AG04449 (cell line): ENCODE measurements at regions of chr2 and their contacts with region 1.

Region 1: DNA sequence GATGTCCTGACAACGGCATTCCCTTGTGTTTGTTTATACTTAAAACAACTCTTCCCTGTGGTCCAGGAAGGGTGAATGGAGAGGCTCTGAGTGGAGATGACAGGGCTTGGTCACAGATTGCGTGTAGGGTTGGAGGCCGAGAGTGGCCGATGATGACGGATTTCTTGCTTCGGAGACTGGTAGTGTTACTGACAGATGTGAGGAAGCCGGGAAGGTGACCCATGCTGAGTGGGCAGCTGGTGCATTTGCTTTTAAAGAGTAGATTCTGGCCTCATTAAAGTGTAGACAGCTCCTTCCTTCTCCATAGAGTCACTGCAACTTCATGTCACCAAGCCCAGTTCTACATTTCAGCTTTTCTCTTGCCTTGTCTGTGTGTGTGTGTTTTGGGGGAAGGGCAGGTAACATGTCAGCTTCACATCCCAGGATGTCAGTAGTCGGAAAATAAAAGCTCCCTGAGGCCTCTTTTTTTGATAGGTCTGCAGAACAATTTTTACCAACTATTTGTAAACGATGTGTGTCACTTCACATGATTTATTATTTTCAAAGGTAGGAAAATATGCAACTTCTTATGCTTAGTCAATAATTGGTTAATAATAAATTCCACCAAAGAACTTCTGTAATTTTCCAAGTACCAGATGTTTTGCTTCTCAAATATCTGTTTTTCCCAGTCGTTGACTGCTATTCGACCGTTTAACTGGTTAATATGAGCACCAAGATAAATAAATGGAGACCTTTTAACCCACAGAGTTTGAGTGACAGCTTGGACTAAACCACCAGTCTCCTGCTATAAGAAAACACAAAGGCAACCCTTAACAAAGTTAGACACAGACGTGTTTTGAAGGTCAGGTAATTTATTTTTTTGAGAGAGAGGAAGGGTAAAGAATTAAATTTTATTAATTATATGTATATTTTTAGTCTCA is 436.9 kb downstream of the SLC4A3 start:
- DNase-seq: no peak
- H3K4me3 ChIP-seq: no peak overlapping the region
- CTCF ChIP-seq: no peak

Region 2: GRCh38 chr2:220051716-220052115 is 12.7 kb before region 1 on chr2:
- CTCF ChIA-PET with region 1: interaction called, 11 read pairs
- POLR2A ChIA-PET with region 1: no interaction called
- DNase-seq: no peak
- H3K4me3 ChIP-seq: no peak overlapping the region
- CTCF ChIP-seq: no peak